PC-9 (cell line): ENCODE measurements at regions of chr21 and their contacts with region 1.

Region 1: DNA sequence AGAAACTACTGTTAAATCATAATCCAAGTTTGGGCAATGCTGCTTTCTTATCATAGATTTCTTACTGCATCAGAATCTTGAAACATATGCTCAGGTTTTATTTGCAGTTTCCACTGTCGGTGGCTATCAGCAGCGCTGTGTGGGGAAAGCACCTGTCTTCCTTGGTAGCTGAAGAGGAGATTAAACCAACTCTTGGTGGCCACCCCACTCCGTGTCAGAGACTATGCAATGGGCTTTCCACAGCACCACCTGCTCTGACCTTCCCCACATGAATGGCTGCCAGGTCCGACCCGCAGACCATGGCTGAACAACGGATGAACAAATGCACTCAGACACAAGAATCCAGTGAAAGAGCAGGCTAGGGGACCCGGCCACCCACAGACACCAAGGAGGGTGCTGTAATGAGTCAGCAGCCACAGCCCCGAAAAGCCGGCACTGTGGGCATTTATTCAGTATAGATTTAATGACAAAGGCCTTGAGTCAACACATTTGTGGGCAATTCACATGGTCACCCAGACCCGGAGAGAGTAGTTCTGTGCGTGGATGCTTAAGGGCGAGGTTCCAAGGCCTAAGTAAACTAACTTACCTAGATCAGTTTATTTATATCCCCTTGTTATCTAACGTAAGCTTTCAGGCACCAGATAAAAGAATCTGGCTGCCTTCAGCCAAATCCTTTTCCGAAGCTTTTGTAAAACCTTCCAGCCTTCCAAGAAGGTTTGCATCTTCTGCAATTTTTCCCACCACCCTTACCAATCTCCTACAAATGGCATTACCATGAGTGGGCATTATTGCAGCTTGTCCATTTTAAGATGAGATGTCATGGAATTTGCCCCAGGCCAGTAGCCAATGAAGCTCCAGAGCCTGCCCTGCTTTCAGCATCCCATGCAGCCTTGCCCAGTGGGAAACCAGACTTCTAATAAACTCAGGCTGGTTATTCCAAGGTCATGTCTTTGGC is 82.7 kb downstream of the HLCS start:
- DNase-seq: no peak
- H3K4me3 ChIP-seq: no peak overlapping the region
- H3K27ac ChIP-seq: no peak overlapping the region
- H3K4me1 ChIP-seq: no peaks in the 10 kb centered on the region
- H3K27me3 ChIP-seq: no peaks in the 10 kb centered on the region
- CTCF ChIP-seq: no peak

Region 2: GRCh38 chr21:36867291-36867905 is 16.4 kb before region 1 on chr21:
- CTCF ChIA-PET with region 1: no interaction called
- POLR2A ChIA-PET with region 1: no interaction called
- intact Hi-C with region 1: loop called (anchors 2 kb)
- DNase-seq: no peak
- H3K4me3 ChIP-seq: no peak overlapping the region
- H3K27ac ChIP-seq: no peak overlapping the region
- H3K4me1 ChIP-seq: peaks cover 3% of the 10 kb centered on the region
- H3K27me3 ChIP-seq: no peaks in the 10 kb centered on the region
- CTCF ChIP-seq: no peak